ENCODE measurements at regions of chr14 and their contacts with region 1.

Region 1: DNA sequence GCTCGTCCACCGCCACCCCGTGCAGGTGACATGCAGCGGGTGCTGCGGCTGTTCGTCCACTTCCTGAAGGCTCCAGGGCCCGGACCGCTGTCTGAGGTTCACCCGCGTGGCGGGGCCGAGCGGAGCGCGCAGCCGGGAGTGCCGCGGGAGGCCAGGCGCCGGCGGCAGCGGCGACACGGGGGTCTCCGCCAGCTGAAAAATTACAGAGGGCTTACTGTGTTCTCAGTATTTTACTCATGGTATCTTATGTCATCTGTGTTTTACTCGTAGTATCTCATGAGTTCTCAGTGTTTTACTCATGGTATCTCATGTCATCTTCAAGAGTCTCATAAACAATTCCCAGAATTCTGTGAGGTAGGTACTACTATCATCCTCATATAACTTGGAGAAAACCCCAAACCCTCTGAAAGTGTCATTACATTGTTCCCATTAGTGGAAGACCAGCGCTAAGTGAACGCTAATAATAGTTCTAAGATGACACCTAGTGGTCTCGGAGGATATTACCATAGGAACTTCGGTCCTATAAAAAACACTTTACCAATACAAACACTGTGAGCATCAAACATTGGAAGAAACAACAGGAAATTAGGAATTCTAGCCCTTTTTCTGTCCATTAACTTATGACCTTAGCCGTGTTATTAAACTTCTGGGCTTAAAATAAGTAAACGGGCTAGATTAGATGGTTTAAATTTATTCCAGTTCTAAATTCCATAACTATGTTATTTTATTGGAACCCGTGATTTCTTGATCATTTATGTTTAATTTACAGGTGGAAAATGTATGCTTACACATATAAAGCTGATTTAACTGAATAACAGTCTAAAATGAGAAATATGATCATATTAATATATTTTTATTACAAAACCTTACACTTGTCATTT is 32.4 kb downstream of the AK7 start:
- DNase-seq: peak; percentile 81

Region 2: GRCh38 chr14:96297000-96297399 is 127.3 kb before region 1 on chr14:
- in situ Hi-C with region 1: loop called (anchors 10 kb)
- DNase-seq: peak; percentile 21